Activated naive CD4-positive, alpha-beta T cell treated with anti-CD3 and anti-CD28 coated beads for 36 hours (primary cell): ENCODE measurements at regions of chr20 and their contacts with region 1.

Region 1: DNA sequence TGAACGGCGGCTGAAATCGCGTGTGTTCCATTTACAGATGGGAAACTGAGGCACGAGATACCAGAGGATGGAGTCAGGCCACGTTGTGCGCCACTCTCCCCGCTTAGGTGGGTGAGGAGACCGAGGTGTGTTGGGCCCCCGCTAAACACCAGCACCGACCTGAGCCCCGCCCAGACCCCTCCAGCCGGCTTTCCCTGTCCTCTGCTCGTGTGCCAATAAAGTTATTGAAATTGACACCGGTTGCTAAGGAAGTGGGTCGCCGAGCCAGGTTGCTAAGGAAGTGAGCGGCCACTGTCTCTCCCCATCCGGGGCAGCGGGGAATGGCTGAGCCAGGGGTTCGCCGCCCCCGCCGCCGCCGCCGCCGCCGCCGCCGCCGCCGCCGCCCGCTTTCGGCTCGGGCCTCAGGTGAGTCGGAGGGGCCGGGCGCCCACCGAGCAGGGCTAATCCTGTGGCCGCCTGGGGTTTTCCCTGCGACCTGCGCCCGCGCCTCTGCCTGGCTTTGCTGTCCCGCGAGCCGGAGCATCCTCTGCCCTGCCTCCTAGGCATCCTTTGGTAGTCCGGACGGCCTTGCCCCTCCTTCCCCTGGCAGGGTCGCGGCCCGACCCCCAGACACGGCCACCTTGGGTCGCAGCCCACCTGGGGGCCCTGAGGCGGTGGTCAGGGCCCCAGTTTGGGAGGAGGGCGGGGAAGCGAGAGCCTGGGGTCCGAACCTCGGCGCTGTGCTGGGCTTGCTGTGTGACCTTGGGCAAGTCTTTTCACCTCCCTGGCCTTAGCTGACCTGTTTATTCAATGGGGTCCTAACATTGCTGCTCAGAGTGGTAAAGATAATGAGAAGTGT is at the start of gene KIF3B:
- DNase-seq: peak; percentile 91
- H3K4me3 Mint-ChIP-seq: peak within 1 kb of the TSS; percentile 89
- H3K27ac Mint-ChIP-seq: peak within 1 kb of the TSS; percentile 89
- H3K4me1 Mint-ChIP-seq: peaks cover 43% of the 10 kb centered on the region
- H3K27me3 Mint-ChIP-seq: no peaks in the 10 kb centered on the region
- total RNA-seq, gene KIF3B: 27.4 to 27.6 TPM

Region 2: DNA sequence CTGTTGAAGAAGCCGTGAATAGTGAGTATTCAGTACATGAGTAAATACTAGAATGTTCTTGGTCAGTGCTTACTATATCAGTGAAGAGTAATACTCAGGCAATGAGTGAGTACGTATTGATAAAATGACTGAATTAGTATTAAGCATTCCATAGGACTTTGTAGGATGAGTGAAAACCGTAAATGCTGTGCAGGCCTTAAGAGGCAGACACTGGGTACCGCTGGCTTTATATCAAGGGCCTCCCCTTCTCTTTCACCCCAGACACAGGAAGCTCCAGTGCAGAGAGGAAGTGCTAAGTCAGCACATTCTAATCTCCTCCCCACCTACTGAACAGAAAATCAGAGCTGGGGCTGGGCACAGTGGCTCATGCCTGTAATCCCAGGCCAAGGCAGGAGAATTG is 45.7 kb before region 1 on chr20:
- CTCF ChIA-PET with region 1: interaction called, 9 read pairs
- intact Hi-C with region 1: loop called (anchors 1 kb)
- DNase-seq: peak; percentile 75
- H3K4me3 Mint-ChIP-seq: peak overlapping the region; percentile 47
- H3K27ac Mint-ChIP-seq: peak overlapping the region; percentile 99
- H3K4me1 Mint-ChIP-seq: peaks cover 39% of the 10 kb centered on the region
- H3K27me3 Mint-ChIP-seq: no peaks in the 10 kb centered on the region